GM12878 (cell line): ENCODE measurements at regions of chr7 and their contacts with region 1.

Region 1: GRCh38 chr7:46315891-46316290 is 394.8 kb upstream of the IGFBP3 start:
- DNase-seq: no peak
- ATAC-seq: no peak
- H3K4me3 ChIP-seq: no peak overlapping the region
- H3K27ac ChIP-seq: no peak overlapping the region
- H3K4me1 ChIP-seq: no peaks in the 10 kb centered on the region
- H3K27me3 ChIP-seq: no peaks in the 10 kb centered on the region
- CTCF ChIP-seq: no peak
- EP300 ChIP-seq: no peak
- POLR2A ChIP-seq: no peak
- RAD21 ChIP-seq: no peak

Region 2: DNA sequence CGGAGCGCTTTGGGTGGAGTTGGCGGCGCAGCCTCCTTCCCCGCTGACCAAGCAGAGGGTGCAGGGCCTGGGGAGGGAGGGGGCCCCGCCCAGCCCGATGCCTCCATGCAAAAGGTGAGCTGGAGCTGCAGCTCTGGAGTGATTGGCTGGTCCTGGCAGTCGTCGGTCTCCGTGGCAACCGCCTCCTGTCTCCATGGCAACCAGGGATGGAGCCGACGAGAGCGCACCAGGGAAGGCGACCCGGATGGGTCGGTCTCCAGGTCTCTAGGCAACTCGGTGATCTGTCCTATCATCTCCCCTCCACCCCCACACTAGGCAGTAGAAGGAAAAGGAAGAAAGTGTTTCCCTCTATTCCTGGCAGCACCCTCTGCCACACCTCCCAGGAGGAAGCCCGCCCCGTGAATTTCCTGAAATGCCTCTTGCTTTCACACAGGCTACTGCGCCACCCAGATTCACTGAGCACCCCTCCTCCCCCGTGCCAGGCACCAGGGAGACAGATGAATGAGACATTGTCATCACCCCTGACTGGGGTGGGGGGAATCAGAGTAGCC is 1226.5 kb before region 1 on chr7:
- CTCF ChIA-PET with region 1: no interaction called
- POLR2A ChIA-PET with region 1: no interaction called
- RAD21 ChIA-PET with region 1: no interaction called
- SMC1A ChIA-PET with region 1: no interaction called
- in situ Hi-C with region 1: no loop called
- intact Hi-C with region 1: no loop called
- DNase-seq: no peak
- ATAC-seq: peak; percentile 63
- H3K4me3 ChIP-seq: no peak overlapping the region; the same call in 1 of the 2 replicates
- H3K27ac ChIP-seq: no peak overlapping the region
- H3K4me1 ChIP-seq: no peaks in the 10 kb centered on the region
- H3K27me3 ChIP-seq: peaks cover 2% of the 10 kb centered on the region in 2 experiments; a peak in 3 of 4 replicates
- CTCF ChIP-seq: no peak
- EP300 ChIP-seq: no peak
- POLR2A ChIP-seq: no peak
- RAD21 ChIP-seq: no peak

Region 3: GRCh38 chr7:46282155-46282554 is 33.7 kb before region 1 on chr7:
- CTCF ChIA-PET with region 1: interaction called, 3 read pairs
- POLR2A ChIA-PET with region 1: no interaction called
- RAD21 ChIA-PET with region 1: no interaction called
- SMC1A ChIA-PET with region 1: interaction called, 12 read pairs
- in situ Hi-C with region 1: no loop called
- intact Hi-C with region 1: no loop called
- DNase-seq: peak; percentile 15
- ATAC-seq: peak; percentile 78
- H3K4me3 ChIP-seq: no peak overlapping the region
- H3K27ac ChIP-seq: no peak overlapping the region; the same call in 1 of the 2 replicates
- H3K4me1 ChIP-seq: no peaks in the 10 kb centered on the region
- H3K27me3 ChIP-seq: no peaks in the 10 kb centered on the region
- CTCF ChIP-seq: no peak
- EP300 ChIP-seq: 0 out of 4 replicates have a peak, but pooled peaks of 1 of the 2 experiments have one; percentile 5
- POLR2A ChIP-seq: no peak
- RAD21 ChIP-seq: no peak

Region 4: DNA sequence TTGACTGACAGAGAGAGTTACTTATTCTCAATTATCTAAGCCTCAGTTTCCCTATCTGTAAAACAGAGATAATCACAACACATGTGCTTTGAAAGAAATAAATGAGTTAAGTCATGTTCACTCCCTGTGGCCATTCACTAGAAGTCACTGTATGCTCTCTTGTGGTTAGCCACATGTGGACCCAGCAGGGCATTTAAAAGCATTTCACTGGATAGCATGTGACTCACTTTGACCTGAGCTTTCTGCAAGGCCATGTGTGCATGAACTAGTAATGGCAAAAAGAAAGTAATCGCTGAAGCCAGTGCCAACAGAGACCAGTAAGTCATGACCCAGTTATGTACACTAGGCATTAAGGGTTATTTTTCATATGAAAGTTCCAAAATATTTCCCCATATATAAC is 162.2 kb after region 1 on chr7:
- CTCF ChIA-PET with region 1: no interaction called
- POLR2A ChIA-PET with region 1: no interaction called
- RAD21 ChIA-PET with region 1: no interaction called
- SMC1A ChIA-PET with region 1: no interaction called
- in situ Hi-C with region 1: no loop called
- intact Hi-C with region 1: no loop called
- DNase-seq: no peak
- ATAC-seq: no peak
- H3K4me3 ChIP-seq: no peak overlapping the region
- H3K27ac ChIP-seq: no peak overlapping the region
- H3K4me1 ChIP-seq: no peaks in the 10 kb centered on the region
- H3K27me3 ChIP-seq: no peaks in the 10 kb centered on the region
- CTCF ChIP-seq: no peak
- EP300 ChIP-seq: no peak
- POLR2A ChIP-seq: no peak
- RAD21 ChIP-seq: no peak